Caco-2 (cell line): ENCODE measurements at regions of chr6 and their contacts with region 1.

Region 1: GRCh38 chr6:157221007-157221816 is 102.1 kb downstream of the TMEM242 start:
- DNase-seq: peak; percentile 89 to 94
- H3K4me3 ChIP-seq: peak overlapping the region; percentile 35
- H3K4me3 Mint-ChIP-seq: peak overlapping the region; percentile 48
- H3K27ac Mint-ChIP-seq: peak overlapping the region; percentile 3
- H3K4me1 ChIP-seq: peaks cover 14% of the 10 kb centered on the region
- H3K4me1 Mint-ChIP-seq: peaks cover 19% of the 10 kb centered on the region
- H3K27me3 ChIP-seq: no peaks in the 10 kb centered on the region
- H3K27me3 Mint-ChIP-seq: no peaks in the 10 kb centered on the region
- CTCF ChIP-seq: peak in 1 of 2 experiments; percentile 3

Region 2: GRCh38 chr6:157184202-157185020 is 36.8 kb before region 1 on chr6:
- CTCF ChIA-PET with region 1: no interaction called
- POLR2A ChIA-PET with region 1: no interaction called
- intact Hi-C with region 1: no loop called
- DNase-seq: peak; percentile 57 to 78
- H3K4me3 ChIP-seq: no peak overlapping the region
- H3K4me3 Mint-ChIP-seq: no peak overlapping the region
- H3K27ac Mint-ChIP-seq: no peak overlapping the region
- H3K4me1 ChIP-seq: peaks cover 10% of the 10 kb centered on the region
- H3K4me1 Mint-ChIP-seq: peaks cover 12% of the 10 kb centered on the region
- H3K27me3 ChIP-seq: no peaks in the 10 kb centered on the region
- H3K27me3 Mint-ChIP-seq: no peaks in the 10 kb centered on the region
- CTCF ChIP-seq: peak; percentile 85 to 89

Region 3: GRCh38 chr6:157274471-157275226 is 53.4 kb after region 1 on chr6:
- CTCF ChIA-PET with region 1: no interaction called
- POLR2A ChIA-PET with region 1: no interaction called
- intact Hi-C with region 1: loop called (anchors 2 kb)
- DNase-seq: peak; percentile 49 to 89
- H3K4me3 ChIP-seq: peak overlapping the region; percentile 73
- H3K4me3 Mint-ChIP-seq: peak overlapping the region; percentile 79
- H3K27ac Mint-ChIP-seq: no peak overlapping the region
- H3K4me1 ChIP-seq: no peaks in the 10 kb centered on the region
- H3K4me1 Mint-ChIP-seq: no peaks in the 10 kb centered on the region
- H3K27me3 ChIP-seq: no peaks in the 10 kb centered on the region
- H3K27me3 Mint-ChIP-seq: no peaks in the 10 kb centered on the region
- CTCF ChIP-seq: peak; percentile 27 to 71